ENCODE measurements at regions of chr19 and their contacts with region 1.

Region 1: GRCh38 chr19:23758187-23759074 is at the start of gene ZNF681:
- DNase-seq: peak; percentile 93
- H3K4me3 Mint-ChIP-seq: peak within 1 kb of the TSS; percentile 95
- H3K27ac Mint-ChIP-seq: peak within 1 kb of the TSS; percentile 92
- H3K4me1 Mint-ChIP-seq: peaks cover 8% of the 10 kb centered on the region
- H3K27me3 Mint-ChIP-seq: no peaks in the 10 kb centered on the region
- total RNA-seq, gene ZNF681: 2.6 and 3.0 TPM in 2 replicates

Region 2: GRCh38 chr19:23249911-23250649 is 508.4 kb before region 1 on chr19 and contains the start of gene ZNF724:
- intact Hi-C with region 1: loop called (anchors 1 kb)
- DNase-seq: peak; percentile 96
- H3K4me3 Mint-ChIP-seq: peak within 1 kb of the TSS; percentile 98
- H3K27ac Mint-ChIP-seq: peak within 1 kb of the TSS; percentile 98
- H3K4me1 Mint-ChIP-seq: peaks cover 7% of the 10 kb centered on the region
- H3K27me3 Mint-ChIP-seq: no peaks in the 10 kb centered on the region
- total RNA-seq, gene ZNF724: 15.5 and 16.1 TPM in 2 replicates

Region 3: DNA sequence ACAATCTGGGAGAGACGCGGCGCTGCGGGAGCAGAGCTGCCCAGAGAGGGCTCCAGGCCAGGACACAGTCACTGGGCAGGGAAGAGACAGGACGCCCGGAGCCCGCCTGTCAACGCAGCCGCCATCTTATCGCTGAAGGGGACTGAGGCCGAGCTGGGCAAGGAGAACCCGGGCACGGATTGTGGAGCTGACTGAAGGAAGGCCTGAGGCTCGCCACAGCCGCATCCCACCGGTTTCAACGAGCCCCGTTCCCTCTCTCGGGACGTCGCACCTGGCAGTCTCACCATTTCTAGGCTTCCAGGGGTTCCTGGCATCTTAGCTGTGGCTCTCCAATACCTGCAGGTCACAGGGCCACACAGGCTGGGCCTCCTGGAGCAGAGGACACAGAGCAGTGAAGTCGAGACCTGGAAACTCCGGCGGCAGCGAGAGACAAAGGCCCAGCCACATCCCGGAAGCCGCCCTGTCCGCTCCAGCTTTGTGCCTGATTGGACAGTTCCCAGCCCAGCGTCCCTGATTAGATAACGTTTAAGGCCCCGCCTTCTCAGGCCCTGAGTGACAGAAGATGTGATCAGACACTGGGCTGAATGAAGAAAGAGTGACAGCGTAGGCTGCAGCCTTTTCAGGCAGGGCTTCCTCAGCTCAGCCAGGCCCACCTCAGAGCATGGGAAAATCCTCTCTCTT is 363.2 kb before region 1 on chr19 and contains the start of gene ZNF91:
- intact Hi-C with region 1: loop called (anchors 10 kb)
- DNase-seq: peak; percentile 96
- H3K4me3 Mint-ChIP-seq: peak within 1 kb of the TSS; percentile 97
- H3K27ac Mint-ChIP-seq: peak within 1 kb of the TSS; percentile 98
- H3K4me1 Mint-ChIP-seq: no peaks in the 10 kb centered on the region
- H3K27me3 Mint-ChIP-seq: no peaks in the 10 kb centered on the region
- total RNA-seq, gene ZNF91: 25.0 and 31.1 TPM in 2 replicates

Region 4: DNA sequence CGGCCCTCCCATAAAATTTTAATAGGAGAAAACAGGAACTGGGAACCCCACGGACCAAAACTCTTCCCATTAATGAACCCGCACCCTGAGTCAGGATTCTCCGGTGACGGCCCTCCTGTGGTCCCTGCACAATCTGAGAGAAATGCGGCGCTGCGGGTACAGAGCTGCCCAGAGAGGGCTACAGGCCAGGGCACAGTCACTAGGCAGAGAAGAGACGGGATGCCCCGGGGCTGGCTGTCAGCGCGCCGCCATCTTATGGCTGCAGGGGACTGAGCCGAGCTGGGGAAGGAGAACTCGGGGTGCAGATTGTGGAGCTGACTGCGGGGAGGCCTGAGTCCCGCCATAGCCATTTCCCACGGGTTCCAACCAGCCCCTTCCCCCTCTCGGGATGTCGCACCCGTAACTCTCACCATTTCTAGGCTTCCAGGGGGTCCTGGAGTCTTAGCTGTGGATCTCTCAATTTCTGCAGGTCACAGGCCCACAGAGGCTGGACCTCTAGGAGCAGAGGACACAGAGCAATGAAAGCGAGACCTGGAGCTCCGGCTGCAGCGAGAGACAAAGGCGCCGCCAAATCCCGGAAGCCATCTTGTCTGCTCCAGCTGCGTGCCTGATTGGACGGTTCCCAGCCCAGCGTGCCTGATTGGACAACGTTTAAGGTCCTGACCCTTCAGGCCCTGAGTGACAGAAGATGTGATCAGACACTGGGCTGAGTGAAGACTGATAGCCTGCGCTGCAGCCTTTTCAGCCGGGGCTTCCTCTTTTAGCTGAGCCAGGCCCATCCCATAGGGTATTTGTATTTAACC is 71.6 kb before region 1 on chr19 and contains the start of gene ZNF675:
- intact Hi-C with region 1: loop called (anchors 2 kb)
- DNase-seq: peak; percentile 96
- H3K4me3 Mint-ChIP-seq: peak within 1 kb of the TSS; percentile 97
- H3K27ac Mint-ChIP-seq: peak within 1 kb of the TSS; percentile 99
- H3K4me1 Mint-ChIP-seq: peaks cover 10% of the 10 kb centered on the region
- H3K27me3 Mint-ChIP-seq: no peaks in the 10 kb centered on the region
- total RNA-seq, gene ZNF675: 17.0 and 17.3 TPM in 2 replicates

Region 5: GRCh38 chr19:24033301-24033962 is 275.0 kb after region 1 on chr19:
- intact Hi-C with region 1: loop called (anchors 5 kb)
- DNase-seq: peak; percentile 94
- H3K4me3 Mint-ChIP-seq: peak overlapping the region; percentile 98
- H3K27ac Mint-ChIP-seq: peak overlapping the region; percentile 99
- H3K4me1 Mint-ChIP-seq: peaks cover 23% of the 10 kb centered on the region
- H3K27me3 Mint-ChIP-seq: no peaks in the 10 kb centered on the region